ENCODE measurements at regions of chr17 and their contacts with region 1.

Region 1: GRCh38 chr17:19004421-19005136 is at the start of gene FAM83G:
- DNase-seq: peak; percentile 67 to 92 (median 71)
- ATAC-seq: peak; percentile 90
- H3K4me3 ChIP-seq: peak within 1 kb of the TSS; percentile 61
- H3K4me3 Mint-ChIP-seq: peak within 1 kb of the TSS; percentile 73 to 94 (median 88)
- H3K27ac ChIP-seq: peak within 1 kb of the TSS; percentile 84
- H3K27ac Mint-ChIP-seq: peak within 1 kb of the TSS; percentile 59 to 94 (median 89)
- H3K4me1 ChIP-seq: peaks cover 18 to 30% of the 10 kb centered on the region in 2 donors
- H3K4me1 Mint-ChIP-seq: peaks cover 15 to 37% (median 25%) of the 10 kb centered on the region in 7 donors
- H3K27me3 ChIP-seq: no peaks in the 10 kb centered on the region
- H3K27me3 Mint-ChIP-seq: peaks cover 0 to 19% (median 0%) of the 10 kb centered on the region in 5 donors
- total RNA-seq, gene FAM83G: 3.9 to 9.1 (median 6.9) TPM

Region 2: GRCh38 chr17:18960803-18961511 is 43.6 kb before region 1 on chr17:
- CTCF ChIA-PET with region 1: interaction called, 4 read pairs
- POLR2A ChIA-PET with region 1: no interaction called
- intact Hi-C with region 1: loop called (anchors 2 to 5 kb)
- DNase-seq: peak; percentile 27 to 86 (median 45)
- ATAC-seq: peak; percentile 85
- H3K4me3 ChIP-seq: no peak overlapping the region
- H3K4me3 Mint-ChIP-seq: no peak overlapping the region
- H3K27ac ChIP-seq: no peak overlapping the region
- H3K27ac Mint-ChIP-seq: peak overlapping the region in 5 of 9 donors; percentile 16 to 58 (median 57)
- H3K4me1 ChIP-seq: peaks cover 6 to 12% of the 10 kb centered on the region in 2 donors
- H3K4me1 Mint-ChIP-seq: peaks cover 10 to 45% (median 32%) of the 10 kb centered on the region in 7 donors
- H3K27me3 ChIP-seq: no peaks in the 10 kb centered on the region
- H3K27me3 Mint-ChIP-seq: no peaks in the 10 kb centered on the region

Region 3: GRCh38 chr17:19513897-19514488 is 509.4 kb after region 1 on chr17:
- CTCF ChIA-PET with region 1: no interaction called
- POLR2A ChIA-PET with region 1: no interaction called
- intact Hi-C with region 1: no loop called
- DNase-seq: peak; percentile 46 to 71 (median 66)
- ATAC-seq: peak; percentile 82
- H3K4me3 ChIP-seq: no peak overlapping the region
- H3K4me3 Mint-ChIP-seq: no peak overlapping the region
- H3K27ac ChIP-seq: no peak overlapping the region
- H3K27ac Mint-ChIP-seq: peak overlapping the region in 3 of 9 donors; percentile 3 to 56 (median 36)
- H3K4me1 ChIP-seq: peaks cover 0 to 4% of the 10 kb centered on the region in 2 donors
- H3K4me1 Mint-ChIP-seq: peaks cover 0 to 5% (median under 1%) of the 10 kb centered on the region in 7 donors
- H3K27me3 ChIP-seq: no peaks in the 10 kb centered on the region
- H3K27me3 Mint-ChIP-seq: peaks cover 0 to 11% (median 0%) of the 10 kb centered on the region in 5 donors